ENCODE measurements at regions of chr19 and their contacts with region 1.

Region 1: GRCh38 chr19:3409346-3410064 is 43.1 kb downstream of the NFIC start:
- DNase-seq: peak; percentile 45 to 47
- H3K4me3 ChIP-seq: peak overlapping the region in 3 of 4 donors; percentile 9 to 23 (median 13)
- H3K27ac ChIP-seq: peak overlapping the region; percentile 44 to 100 (median 98)
- H3K4me1 ChIP-seq: peaks cover 53 to 95% (median 76%) of the 10 kb centered on the region in 4 donors
- H3K27me3 ChIP-seq: no peaks in the 10 kb centered on the region
- CTCF ChIP-seq: no peak
- EP300 ChIP-seq: peak; percentile 100
- POLR2A ChIP-seq: no peak

Region 2: DNA sequence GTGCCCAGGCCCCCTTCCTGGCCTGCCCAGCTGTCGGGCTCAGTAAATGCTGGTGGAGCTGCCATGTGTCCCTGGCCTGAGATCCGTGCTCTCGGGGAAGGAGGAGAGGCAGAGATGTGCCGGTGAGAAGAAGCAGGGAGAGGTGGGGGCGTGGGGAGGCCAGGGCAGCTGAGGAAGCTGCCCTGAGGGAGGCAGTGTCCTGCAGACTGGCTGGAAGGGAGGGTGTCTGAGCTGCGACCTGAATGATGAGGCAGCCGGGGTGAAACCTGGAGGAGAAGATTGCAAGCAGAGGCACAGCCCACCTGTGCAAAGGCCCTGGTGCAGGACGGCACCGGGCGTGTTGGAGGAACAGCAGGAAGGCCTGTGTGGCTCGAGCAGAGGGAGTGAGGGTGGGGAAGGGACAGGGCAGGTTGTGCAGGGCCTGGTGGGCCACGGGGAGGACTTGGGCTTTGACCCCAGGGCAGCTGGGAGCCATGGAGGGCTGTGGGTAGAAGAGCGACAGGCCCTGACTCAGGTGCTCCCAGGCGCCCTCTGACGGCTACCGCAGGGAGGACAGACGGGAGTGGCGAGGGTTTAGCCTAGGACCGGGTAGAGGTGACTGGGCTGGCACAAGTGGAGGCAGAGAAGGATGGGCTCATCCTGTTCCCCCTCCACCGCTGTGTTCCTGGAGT is 199.0 kb before region 1 on chr19:
- intact Hi-C with region 1: no loop called
- DNase-seq: peak; percentile 64 to 67
- H3K4me3 ChIP-seq: no peak overlapping the region
- H3K27ac ChIP-seq: no peak overlapping the region
- H3K4me1 ChIP-seq: no peaks in the 10 kb centered on the region
- H3K27me3 ChIP-seq: no peaks in the 10 kb centered on the region
- CTCF ChIP-seq: peak in 5 of 7 experiments; percentile 22 to 63 (median 29)
- EP300 ChIP-seq: no peak
- POLR2A ChIP-seq: no peak

Region 3: DNA sequence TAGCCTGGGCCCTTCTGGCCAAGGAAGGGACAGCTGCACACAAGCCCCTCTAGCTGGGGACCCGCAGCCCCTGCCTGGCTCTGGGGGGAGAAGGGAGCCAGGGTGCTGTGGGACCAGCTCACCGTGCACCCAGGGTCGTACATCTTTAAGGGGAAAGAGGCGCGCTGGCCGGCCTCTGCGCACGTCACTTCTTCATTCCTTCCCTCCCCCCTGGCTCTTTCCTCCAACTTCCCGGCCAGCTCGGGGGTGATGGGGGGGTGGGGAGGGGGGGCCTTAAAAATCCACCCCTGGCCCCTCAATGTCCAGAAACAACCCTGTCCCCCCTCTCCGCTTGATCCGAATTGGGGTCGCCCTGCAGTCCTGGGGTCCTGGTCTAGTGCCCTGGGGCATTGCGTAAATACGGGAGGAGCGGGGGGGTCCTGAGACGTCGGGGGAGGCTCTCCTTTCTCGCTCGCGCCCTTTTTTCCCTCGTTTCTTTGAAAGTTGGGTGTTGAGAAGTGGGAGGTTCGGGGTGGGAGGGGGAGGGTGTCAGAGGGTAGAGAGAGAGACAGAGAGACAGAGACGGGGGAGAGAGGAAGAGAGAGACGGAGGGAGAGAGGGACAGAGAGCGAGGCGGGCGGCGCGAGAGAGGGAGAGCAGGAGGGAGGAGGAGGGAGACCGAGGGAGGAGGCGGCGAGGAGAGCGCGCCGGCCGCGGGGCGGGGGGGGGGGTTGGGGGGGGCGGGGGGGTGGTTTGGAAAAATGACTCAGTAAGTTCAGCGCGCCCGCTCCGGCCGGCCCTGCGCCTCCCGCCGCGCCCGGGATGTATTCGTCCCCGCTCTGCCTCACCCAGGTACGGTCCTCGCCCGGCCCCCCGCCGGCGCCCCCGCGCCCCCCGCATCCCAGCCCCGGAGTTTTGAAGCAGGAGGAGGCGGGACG is 43.4 kb before region 1 on chr19 and contains the start of gene NFIC:
- intact Hi-C with region 1: loop called (anchors 10 kb)
- DNase-seq: peak; percentile 78 to 88
- H3K4me3 ChIP-seq: peak within 1 kb of the TSS; percentile 75 to 95 (median 86)
- H3K27ac ChIP-seq: peak within 1 kb of the TSS; percentile 95 to 100 (median 99)
- H3K4me1 ChIP-seq: peaks cover 58 to 91% (median 78%) of the 10 kb centered on the region in 4 donors
- H3K27me3 ChIP-seq: no peaks in the 10 kb centered on the region
- CTCF ChIP-seq: no peak
- EP300 ChIP-seq: no peak
- POLR2A ChIP-seq: no peak
- total RNA-seq, gene NFIC: 32.3 to 251 (median 94.2) TPM

Region 4: DNA sequence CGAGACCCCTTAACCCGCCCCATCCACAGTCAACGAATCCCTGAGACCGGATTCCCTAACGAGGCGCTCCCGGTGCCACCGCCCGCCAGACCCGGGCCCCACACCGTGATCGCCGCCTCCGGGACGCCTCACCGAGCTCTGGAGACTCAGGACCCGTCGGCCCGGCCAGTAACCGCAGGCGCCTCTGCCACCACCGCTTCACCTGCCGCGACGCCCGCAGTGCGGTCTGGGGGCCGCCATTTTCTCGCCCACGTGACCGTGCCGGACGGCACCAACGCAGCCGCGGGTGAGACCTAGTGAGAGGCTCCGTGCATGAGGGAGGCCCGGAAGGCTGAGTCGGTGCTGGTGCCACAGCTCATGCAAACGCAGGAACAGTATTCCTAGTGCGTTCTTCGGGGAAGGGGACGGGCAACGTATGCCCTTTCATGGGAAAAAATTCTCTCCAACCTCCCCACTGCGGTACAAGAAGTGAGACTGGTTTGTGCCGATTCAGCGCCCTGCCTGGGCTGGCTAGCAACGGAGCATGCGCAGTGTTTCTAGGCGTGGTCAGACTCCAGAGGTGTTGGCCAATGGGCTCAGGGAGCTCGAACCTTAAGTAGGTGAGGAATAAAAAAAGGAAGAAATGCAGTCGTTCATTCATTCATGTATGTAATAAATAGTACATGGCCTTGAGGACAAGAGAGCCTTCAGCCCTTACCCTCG is 91.1 kb after region 1 on chr19 and contains the start of gene DOHH:
- intact Hi-C with region 1: no loop called
- DNase-seq: peak; percentile 96 to 99
- H3K4me3 ChIP-seq: peak within 1 kb of the TSS; percentile 81 to 100 (median 96)
- H3K27ac ChIP-seq: peak within 1 kb of the TSS; percentile 69 to 96 (median 92)
- H3K4me1 ChIP-seq: peaks cover 20 to 34% (median 26%) of the 10 kb centered on the region in 4 donors
- H3K27me3 ChIP-seq: no peaks in the 10 kb centered on the region
- CTCF ChIP-seq: peak in 1 of 7 experiments; percentile 7
- EP300 ChIP-seq: no peak
- POLR2A ChIP-seq: no peak
- total RNA-seq, gene DOHH: 0.45 to 21.7 (median 11.1) TPM in 4 of 5 donors, not detected in the other